ENCODE measurements at regions of chr2 and their contacts with region 1.

Region 1: DNA sequence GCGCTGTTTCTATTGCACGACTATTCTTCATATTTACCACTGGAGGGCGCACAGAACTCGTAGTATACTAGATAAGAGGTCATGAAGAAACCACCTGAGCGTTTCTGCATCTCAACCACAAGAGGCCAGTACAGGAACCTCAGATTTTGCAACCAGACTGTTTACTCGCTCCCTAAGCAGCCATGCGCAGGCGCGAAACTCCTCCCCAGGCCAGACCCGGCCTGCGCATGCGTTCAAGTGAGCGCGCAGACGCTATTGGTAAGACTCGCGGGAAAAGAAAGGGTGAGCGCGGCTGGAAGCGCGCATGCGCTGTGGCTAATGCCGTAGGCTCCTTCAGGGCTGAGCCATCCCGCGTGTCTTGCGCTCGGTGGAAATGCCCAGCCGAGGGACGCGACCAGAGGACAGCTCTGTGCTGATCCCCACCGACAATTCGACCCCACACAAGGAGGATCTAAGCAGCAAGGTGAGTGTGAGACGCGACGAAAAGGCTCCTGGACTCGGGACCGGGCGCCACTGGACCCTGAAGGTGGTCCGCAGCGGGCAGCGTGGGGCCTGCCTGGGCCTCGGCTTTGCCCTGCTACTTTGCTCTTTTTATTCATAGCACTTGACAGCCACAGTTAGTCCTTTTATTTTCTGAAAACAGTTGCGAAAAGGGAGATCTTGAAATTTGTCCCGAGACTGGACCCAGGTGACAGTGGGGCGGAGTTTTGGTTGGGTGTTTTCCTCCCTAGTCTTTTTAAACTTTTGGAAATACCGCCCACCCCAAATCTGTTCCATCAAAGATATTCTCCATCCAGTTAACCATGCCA is at the start of gene ASNSD1:
- DNase-seq: peak; percentile 100
- H3K4me3 ChIP-seq: peak within 1 kb of the TSS; percentile 59 to 95 (median 87)
- H3K27ac ChIP-seq: peak within 1 kb of the TSS; percentile 76
- H3K4me1 ChIP-seq: peaks cover 10% of the 10 kb centered on the region
- H3K27me3 ChIP-seq: peaks cover 0 to 2% of the 10 kb centered on the region in 2 experiments
- CTCF ChIP-seq: peak; percentile 82 to 94
- POLR2A ChIP-seq: peak; percentile 96
- total RNA-seq, gene ASNSD1: 39.5 and 41.9 TPM in 2 replicates

Region 2: GRCh38 chr2:189440644-189440946 is 220.8 kb before region 1 on chr2:
- CTCF ChIA-PET with region 1: no interaction called
- POLR2A ChIA-PET with region 1: no interaction called
- dilution Hi-C with region 1: no loop called
- intact Hi-C with region 1: no loop called
- DNase-seq: no peak
- H3K4me3 ChIP-seq: peak overlapping the region; percentile 88 to 95 (median 93)
- H3K27ac ChIP-seq: peak overlapping the region; percentile 77
- H3K4me1 ChIP-seq: peaks cover 16% of the 10 kb centered on the region
- H3K27me3 ChIP-seq: no peaks in the 10 kb centered on the region
- CTCF ChIP-seq: no peak
- POLR2A ChIP-seq: no peak

Region 3: DNA sequence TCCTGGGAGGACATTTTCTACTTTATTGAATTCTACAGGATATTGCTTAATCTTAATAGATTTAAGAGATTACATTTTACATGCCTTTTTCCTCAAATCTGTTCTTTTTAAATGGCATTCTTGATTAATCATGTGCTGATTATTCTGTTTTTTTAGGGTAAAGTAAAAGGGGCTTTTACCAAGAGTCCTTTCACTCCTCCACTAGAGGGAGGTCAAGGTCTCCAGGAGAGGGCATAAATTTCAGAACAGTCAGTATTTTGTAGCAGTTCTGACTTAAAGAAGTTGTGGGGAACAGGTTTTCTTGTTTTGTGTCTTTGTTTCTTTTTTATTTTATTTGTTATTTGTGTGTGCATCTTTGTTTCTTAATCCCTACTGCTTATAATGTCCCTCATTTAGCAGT is 194.7 kb before region 1 on chr2:
- CTCF ChIA-PET with region 1: interaction called, 3 read pairs
- POLR2A ChIA-PET with region 1: no interaction called
- dilution Hi-C with region 1: no loop called
- intact Hi-C with region 1: loop called (anchors 1 kb)
- DNase-seq: peak; percentile 60
- H3K4me3 ChIP-seq: no peak overlapping the region
- H3K27ac ChIP-seq: no peak overlapping the region
- H3K4me1 ChIP-seq: no peaks in the 10 kb centered on the region
- H3K27me3 ChIP-seq: no peaks in the 10 kb centered on the region
- CTCF ChIP-seq: peak; percentile 28 to 56
- POLR2A ChIP-seq: no peak

Region 4: DNA sequence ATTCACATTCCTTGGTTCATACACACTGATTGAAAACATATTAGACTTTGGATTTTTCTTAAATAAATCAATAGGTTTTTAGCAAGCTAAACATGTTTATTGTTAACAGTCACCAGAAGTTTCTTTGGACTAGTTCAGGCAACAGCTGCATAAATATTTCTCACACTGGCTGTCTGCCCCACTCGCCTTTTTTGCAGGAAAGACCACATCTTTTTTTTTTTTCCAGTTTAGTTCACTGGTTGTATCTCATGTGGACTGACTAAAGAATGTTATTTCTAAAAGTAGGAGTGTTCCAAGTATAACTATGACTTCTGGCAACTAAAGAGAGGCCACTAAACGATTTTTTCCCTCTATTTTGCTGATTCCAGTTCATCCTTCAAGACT is 111.9 kb before region 1 on chr2:
- CTCF ChIA-PET with region 1: no interaction called
- POLR2A ChIA-PET with region 1: no interaction called
- dilution Hi-C with region 1: no loop called
- intact Hi-C with region 1: no loop called
- DNase-seq: peak; percentile 87
- H3K4me3 ChIP-seq: no peak overlapping the region
- H3K27ac ChIP-seq: no peak overlapping the region
- H3K4me1 ChIP-seq: no peaks in the 10 kb centered on the region
- H3K27me3 ChIP-seq: no peaks in the 10 kb centered on the region
- CTCF ChIP-seq: no peak
- POLR2A ChIP-seq: no peak

Region 5: GRCh38 chr2:189651284-189651683 is 10.1 kb before region 1 on chr2:
- CTCF ChIA-PET with region 1: interaction called, 15 read pairs
- POLR2A ChIA-PET with region 1: no interaction called
- dilution Hi-C with region 1: no loop called
- intact Hi-C with region 1: no loop called
- DNase-seq: no peak
- H3K4me3 ChIP-seq: no peak overlapping the region
- H3K27ac ChIP-seq: no peak overlapping the region
- H3K4me1 ChIP-seq: no peaks in the 10 kb centered on the region
- H3K27me3 ChIP-seq: no peaks in the 10 kb centered on the region
- CTCF ChIP-seq: no peak
- POLR2A ChIP-seq: no peak

Region 6: GRCh38 chr2:189698020-189698887 is 36.9 kb after region 1 on chr2:
- CTCF ChIA-PET with region 1: interaction called, 66 read pairs
- POLR2A ChIA-PET with region 1: no interaction called
- dilution Hi-C with region 1: no loop called
- intact Hi-C with region 1: loop called (anchors 1 kb)
- DNase-seq: peak; percentile 60
- H3K4me3 ChIP-seq: no peak overlapping the region
- H3K27ac ChIP-seq: no peak overlapping the region
- H3K4me1 ChIP-seq: no peaks in the 10 kb centered on the region
- H3K27me3 ChIP-seq: no peaks in the 10 kb centered on the region
- CTCF ChIP-seq: peak; percentile 13 to 33
- POLR2A ChIP-seq: no peak

Region 7: DNA sequence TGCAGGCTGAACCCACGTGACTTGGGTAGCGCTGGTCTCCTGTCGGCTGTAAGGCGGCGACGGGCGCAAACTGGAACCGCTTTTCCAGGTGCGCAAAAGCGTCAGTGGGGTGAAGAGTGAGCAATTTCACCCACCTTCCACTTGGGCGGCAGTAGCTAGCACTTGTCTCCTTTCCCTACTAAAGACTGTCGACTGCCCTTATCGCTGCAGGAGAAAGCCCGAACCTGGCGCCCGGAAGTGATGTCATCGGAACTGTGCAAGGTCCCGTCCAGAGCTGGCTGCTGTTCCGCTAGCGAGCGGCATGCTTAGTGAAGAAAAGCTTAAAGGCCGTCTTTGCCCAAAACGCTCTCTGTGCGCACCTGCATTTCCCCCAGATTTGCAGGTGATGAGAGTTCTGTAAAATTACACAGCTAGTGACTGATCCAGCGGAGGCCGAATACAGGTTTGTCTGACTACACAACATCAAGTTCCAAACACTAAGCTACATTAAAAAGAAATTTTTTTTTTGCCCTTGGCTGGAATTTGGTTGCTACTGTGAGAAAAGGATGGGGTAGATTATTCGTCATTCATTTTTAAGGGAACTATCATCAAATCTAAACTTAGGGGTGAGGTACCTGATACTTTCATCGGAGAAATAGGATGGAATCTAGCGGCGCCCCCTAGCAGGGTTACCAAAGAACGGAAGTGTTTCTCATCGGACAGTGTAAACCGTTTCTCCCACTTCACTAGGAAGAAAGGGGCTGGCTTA is 101.4 kb after region 1 on chr2 and contains the start of gene OSGEPL1:
- CTCF ChIA-PET with region 1: interaction called, 30 read pairs
- POLR2A ChIA-PET with region 1: no interaction called
- dilution Hi-C with region 1: no loop called
- intact Hi-C with region 1: loop called (anchors 1 kb)
- DNase-seq: peak; percentile 93
- H3K4me3 ChIP-seq: peak within 1 kb of the TSS; percentile 85 to 97 (median 85)
- H3K27ac ChIP-seq: peak within 1 kb of the TSS; percentile 75
- H3K4me1 ChIP-seq: peaks cover 11% of the 10 kb centered on the region
- H3K27me3 ChIP-seq: no peaks in the 10 kb centered on the region
- CTCF ChIP-seq: peak; percentile 45 to 49
- POLR2A ChIP-seq: peak; percentile 53
- total RNA-seq, gene OSGEPL1: 5.4 and 5.9 TPM in 2 replicates

Region 8: DNA sequence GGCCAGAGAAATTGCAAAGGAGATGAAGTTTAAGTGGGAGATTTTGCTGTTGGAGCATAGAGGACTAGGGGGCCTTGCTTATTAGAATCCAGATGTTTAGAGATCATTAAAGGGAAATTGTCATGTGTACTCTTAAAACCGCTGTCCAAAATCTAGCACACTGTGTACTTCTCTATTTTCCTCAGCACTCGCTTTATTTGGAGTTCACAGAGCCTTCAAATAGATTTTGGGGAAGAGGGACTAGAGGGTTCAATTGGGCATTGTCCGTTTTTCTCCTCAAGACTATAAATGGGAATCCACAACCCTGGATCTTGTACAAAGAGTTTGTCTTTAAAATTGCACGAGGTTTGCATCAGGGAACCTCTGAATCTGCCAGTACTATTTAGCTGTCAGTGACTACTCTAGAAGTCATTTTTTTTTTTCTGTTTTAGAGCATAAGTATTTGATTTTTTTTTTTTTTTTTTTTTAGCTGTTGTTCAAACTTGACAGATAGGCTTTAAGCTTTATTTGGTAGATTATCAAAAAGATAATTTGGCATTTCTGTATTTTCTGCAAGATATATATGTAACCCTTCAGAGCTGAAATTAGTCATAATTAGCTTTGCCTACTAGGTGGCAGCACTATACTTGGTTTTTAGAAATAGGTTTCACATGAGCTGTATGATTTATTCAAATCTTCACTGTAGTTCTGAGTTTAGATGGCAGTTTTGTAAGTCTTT is 137.1 kb after region 1 on chr2:
- CTCF ChIA-PET with region 1: interaction called, 14 read pairs
- POLR2A ChIA-PET with region 1: no interaction called
- dilution Hi-C with region 1: no loop called
- intact Hi-C with region 1: no loop called
- DNase-seq: peak; percentile 64
- H3K4me3 ChIP-seq: no peak overlapping the region
- H3K27ac ChIP-seq: no peak overlapping the region
- H3K4me1 ChIP-seq: no peaks in the 10 kb centered on the region
- H3K27me3 ChIP-seq: no peaks in the 10 kb centered on the region
- CTCF ChIP-seq: peak; percentile 24 to 41
- POLR2A ChIP-seq: no peak

Region 9: DNA sequence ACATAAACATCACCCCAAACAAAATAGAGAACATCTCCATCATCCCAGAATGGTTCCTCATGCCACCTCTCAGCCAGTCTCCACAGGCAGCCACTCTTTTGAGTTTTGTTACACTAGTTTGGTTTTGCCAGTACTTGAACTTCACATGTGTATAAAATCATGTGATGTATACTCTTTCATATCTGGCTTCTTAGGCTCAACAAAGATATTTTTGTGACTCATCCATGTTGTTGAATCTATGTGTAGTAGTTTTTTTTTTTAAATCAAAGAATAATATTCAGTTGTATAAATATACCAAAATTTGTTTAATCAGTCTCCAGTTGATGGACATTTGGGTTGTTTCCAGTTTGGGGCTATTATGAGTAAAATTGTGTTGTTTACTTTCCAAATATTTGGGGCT is 198.8 kb after region 1 on chr2:
- CTCF ChIA-PET with region 1: no interaction called
- POLR2A ChIA-PET with region 1: no interaction called
- dilution Hi-C with region 1: no loop called
- intact Hi-C with region 1: no loop called
- DNase-seq: no peak
- H3K4me3 ChIP-seq: no peak overlapping the region
- H3K27ac ChIP-seq: no peak overlapping the region
- H3K4me1 ChIP-seq: no peaks in the 10 kb centered on the region
- H3K27me3 ChIP-seq: no peaks in the 10 kb centered on the region
- CTCF ChIP-seq: no peak
- POLR2A ChIP-seq: no peak

Region 10: GRCh38 chr2:190376591-190377245 is 715.4 kb after region 1 on chr2:
- CTCF ChIA-PET with region 1: no interaction called
- POLR2A ChIA-PET with region 1: no interaction called
- dilution Hi-C with region 1: no loop called
- intact Hi-C with region 1: loop called (anchors 1 kb)
- DNase-seq: no peak
- H3K4me3 ChIP-seq: no peak overlapping the region
- H3K27ac ChIP-seq: no peak overlapping the region
- H3K4me1 ChIP-seq: no peaks in the 10 kb centered on the region
- H3K27me3 ChIP-seq: peaks cover 0 to 4% of the 10 kb centered on the region in 2 experiments
- CTCF ChIP-seq: no peak
- POLR2A ChIP-seq: no peak